GM12878 (cell line): ENCODE measurements at regions of chrX and their contacts with region 1.

Region 1: GRCh38 chrX:78029663-78030062 is 60.2 kb upstream of the PGAM4 start:
- DNase-seq: no peak
- ATAC-seq: peak; percentile 71
- H3K4me3 ChIP-seq: no peak overlapping the region
- H3K27ac ChIP-seq: no peak overlapping the region
- H3K4me1 ChIP-seq: no peaks in the 10 kb centered on the region
- H3K27me3 ChIP-seq: no peaks in the 10 kb centered on the region
- CTCF ChIP-seq: peak; percentile 18 to 76 (median 41); a peak in 4 of 6 replicates
- EP300 ChIP-seq: no peak
- POLR2A ChIP-seq: no peak
- RAD21 ChIP-seq: peak; percentile 44

Region 2: DNA sequence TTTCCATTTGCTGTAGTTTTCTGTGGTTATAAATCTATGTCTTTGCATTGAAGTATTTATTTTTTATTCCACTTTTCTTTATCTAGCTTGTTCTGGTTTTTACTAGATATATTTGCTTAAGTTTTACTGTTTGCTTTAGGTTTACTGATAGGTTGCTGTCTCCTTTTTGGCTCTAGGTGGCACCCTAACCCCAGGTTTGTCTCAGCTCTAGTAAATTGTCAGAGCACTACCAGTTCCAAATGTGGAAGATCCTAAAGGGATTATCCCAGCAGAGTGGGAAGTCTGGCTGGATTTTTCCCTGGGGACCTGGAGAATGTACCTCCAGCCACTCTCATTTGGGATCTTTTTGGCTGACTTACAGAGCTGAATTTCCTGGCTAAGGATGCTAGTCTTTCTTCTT is 1750.7 kb before region 1 on chrX:
- CTCF ChIA-PET with region 1: interaction called, 16 read pairs
- POLR2A ChIA-PET with region 1: no interaction called
- RAD21 ChIA-PET with region 1: interaction called, 8 read pairs
- SMC1A ChIA-PET with region 1: interaction called, 15 read pairs
- in situ Hi-C with region 1: loop called (anchors 10 kb)
- intact Hi-C with region 1: loop called (anchors 1 kb)
- DNase-seq: peak; percentile 5
- ATAC-seq: peak; percentile 79
- H3K4me3 ChIP-seq: no peak overlapping the region
- H3K27ac ChIP-seq: no peak overlapping the region
- H3K4me1 ChIP-seq: no peaks in the 10 kb centered on the region
- H3K27me3 ChIP-seq: no peaks in the 10 kb centered on the region
- CTCF ChIP-seq: peak; percentile 61 to 79 (median 74)
- EP300 ChIP-seq: no peak
- POLR2A ChIP-seq: no peak
- RAD21 ChIP-seq: peak; percentile 94

Region 3: DNA sequence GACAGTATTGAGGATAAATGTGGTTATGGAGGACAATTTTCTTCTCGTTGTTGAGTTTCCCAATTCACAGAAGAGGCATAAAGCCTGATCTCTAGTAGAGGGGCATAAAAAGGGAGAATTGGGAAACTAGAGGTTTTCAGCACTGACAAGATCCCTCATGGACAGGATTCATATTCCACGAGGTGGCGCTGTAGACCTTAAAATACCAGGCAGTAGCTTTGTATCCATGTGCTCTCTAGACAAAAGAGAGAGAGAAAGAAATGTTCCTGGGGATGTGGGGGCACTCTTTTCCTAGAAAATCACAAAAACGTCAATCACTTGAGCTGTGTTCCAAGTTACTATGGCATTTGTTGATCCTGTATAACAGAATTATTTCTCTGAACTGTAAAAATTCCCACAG is 1473.8 kb before region 1 on chrX:
- CTCF ChIA-PET with region 1: interaction called, 8 read pairs
- POLR2A ChIA-PET with region 1: no interaction called
- RAD21 ChIA-PET with region 1: interaction called, 4 read pairs
- SMC1A ChIA-PET with region 1: interaction called, 3 read pairs
- in situ Hi-C with region 1: loop called (anchors 10 kb)
- intact Hi-C with region 1: no loop called
- DNase-seq: no peak
- ATAC-seq: no peak
- H3K4me3 ChIP-seq: no peak overlapping the region
- H3K27ac ChIP-seq: no peak overlapping the region
- H3K4me1 ChIP-seq: no peaks in the 10 kb centered on the region
- H3K27me3 ChIP-seq: no peaks in the 10 kb centered on the region
- CTCF ChIP-seq: peak in 2 of 3 experiments; percentile 4 to 29; a peak in 2 of 6 replicates
- EP300 ChIP-seq: no peak
- POLR2A ChIP-seq: no peak
- RAD21 ChIP-seq: peak; percentile 63

Region 4: DNA sequence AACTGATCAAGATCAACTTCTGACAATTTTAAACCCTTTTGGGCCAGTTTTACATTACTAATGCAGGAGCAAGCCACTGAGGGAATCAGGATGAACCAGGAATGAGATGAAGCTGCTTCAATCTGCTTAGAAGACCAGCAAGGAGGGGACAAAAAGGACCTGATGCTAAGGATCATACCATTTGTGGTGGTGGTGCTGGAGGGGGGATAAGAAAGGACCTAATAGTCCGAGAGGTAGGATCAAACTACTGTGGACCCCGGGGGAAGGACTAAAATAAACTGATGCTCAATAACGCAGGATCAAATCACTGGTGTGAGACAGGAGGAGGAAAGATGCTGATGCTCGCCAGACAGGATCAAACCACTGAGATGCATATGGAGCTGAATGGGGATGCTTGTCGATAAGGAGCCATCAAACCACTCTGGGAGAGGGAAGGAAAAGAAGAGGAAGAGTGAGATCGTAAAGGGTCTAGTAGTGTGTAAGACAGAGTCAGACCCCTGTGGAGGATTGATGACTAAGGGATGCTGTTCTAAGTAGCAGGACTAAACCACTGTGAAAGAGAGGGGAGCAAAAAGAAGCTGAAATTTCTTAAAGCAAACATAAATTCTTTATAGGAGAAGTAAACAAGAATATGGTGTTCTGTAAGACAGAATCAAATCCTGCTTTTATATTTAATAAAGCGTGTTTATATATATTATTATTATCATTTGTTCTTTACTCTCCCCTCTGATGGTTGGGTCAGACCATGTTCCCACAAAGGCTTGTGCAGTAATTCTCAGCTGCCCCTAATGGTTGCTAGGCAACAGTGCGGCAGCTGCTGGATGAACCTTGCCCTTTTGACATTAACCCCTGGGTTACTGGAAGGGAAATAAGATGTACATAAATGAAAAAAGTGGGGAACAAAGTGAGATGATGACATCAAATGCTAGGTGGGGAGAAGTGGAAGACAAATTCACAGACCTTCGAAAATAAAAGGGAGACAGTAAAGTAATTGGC is 1015.0 kb before region 1 on chrX:
- CTCF ChIA-PET with region 1: no interaction called
- POLR2A ChIA-PET with region 1: no interaction called
- RAD21 ChIA-PET with region 1: no interaction called
- SMC1A ChIA-PET with region 1: no interaction called
- in situ Hi-C with region 1: no loop called
- intact Hi-C with region 1: no loop called
- DNase-seq: no peak
- ATAC-seq: no peak
- H3K4me3 ChIP-seq: no peak overlapping the region
- H3K27ac ChIP-seq: no peak overlapping the region
- H3K4me1 ChIP-seq: no peaks in the 10 kb centered on the region
- H3K27me3 ChIP-seq: no peaks in the 10 kb centered on the region
- CTCF ChIP-seq: no peak
- EP300 ChIP-seq: no peak
- POLR2A ChIP-seq: no peak
- RAD21 ChIP-seq: no peak

Region 5: GRCh38 chrX:77564823-77565222 is 464.8 kb before region 1 on chrX:
- CTCF ChIA-PET with region 1: no interaction called
- POLR2A ChIA-PET with region 1: no interaction called
- RAD21 ChIA-PET with region 1: no interaction called
- SMC1A ChIA-PET with region 1: no interaction called
- in situ Hi-C with region 1: no loop called
- intact Hi-C with region 1: no loop called
- DNase-seq: no peak
- ATAC-seq: no peak
- H3K4me3 ChIP-seq: no peak overlapping the region
- H3K27ac ChIP-seq: no peak overlapping the region
- H3K4me1 ChIP-seq: no peaks in the 10 kb centered on the region
- H3K27me3 ChIP-seq: no peaks in the 10 kb centered on the region
- CTCF ChIP-seq: no peak
- EP300 ChIP-seq: no peak
- POLR2A ChIP-seq: no peak
- RAD21 ChIP-seq: no peak

Region 6: GRCh38 chrX:77675986-77676385 is 353.7 kb before region 1 on chrX:
- CTCF ChIA-PET with region 1: no interaction called
- POLR2A ChIA-PET with region 1: no interaction called
- RAD21 ChIA-PET with region 1: no interaction called
- SMC1A ChIA-PET with region 1: interaction called, 5 read pairs
- in situ Hi-C with region 1: no loop called
- intact Hi-C with region 1: loop called (anchors 5 kb)
- DNase-seq: no peak
- ATAC-seq: no peak
- H3K4me3 ChIP-seq: no peak overlapping the region
- H3K27ac ChIP-seq: no peak overlapping the region
- H3K4me1 ChIP-seq: no peaks in the 10 kb centered on the region
- H3K27me3 ChIP-seq: no peaks in the 10 kb centered on the region
- CTCF ChIP-seq: no peak
- EP300 ChIP-seq: no peak
- POLR2A ChIP-seq: no peak
- RAD21 ChIP-seq: no peak

Region 7: GRCh38 chrX:78048052-78048451 is 18.4 kb after region 1 on chrX:
- CTCF ChIA-PET with region 1: interaction called, 12 read pairs
- POLR2A ChIA-PET with region 1: interaction called, 4 read pairs
- RAD21 ChIA-PET with region 1: interaction called, 3 read pairs
- SMC1A ChIA-PET with region 1: interaction called, 6 read pairs
- in situ Hi-C with region 1: no loop called
- intact Hi-C with region 1: no loop called
- DNase-seq: no peak
- ATAC-seq: no peak
- H3K4me3 ChIP-seq: no peak overlapping the region
- H3K27ac ChIP-seq: no peak overlapping the region
- H3K4me1 ChIP-seq: no peaks in the 10 kb centered on the region
- H3K27me3 ChIP-seq: no peaks in the 10 kb centered on the region
- CTCF ChIP-seq: no peak
- EP300 ChIP-seq: no peak
- POLR2A ChIP-seq: no peak
- RAD21 ChIP-seq: no peak

Region 8: DNA sequence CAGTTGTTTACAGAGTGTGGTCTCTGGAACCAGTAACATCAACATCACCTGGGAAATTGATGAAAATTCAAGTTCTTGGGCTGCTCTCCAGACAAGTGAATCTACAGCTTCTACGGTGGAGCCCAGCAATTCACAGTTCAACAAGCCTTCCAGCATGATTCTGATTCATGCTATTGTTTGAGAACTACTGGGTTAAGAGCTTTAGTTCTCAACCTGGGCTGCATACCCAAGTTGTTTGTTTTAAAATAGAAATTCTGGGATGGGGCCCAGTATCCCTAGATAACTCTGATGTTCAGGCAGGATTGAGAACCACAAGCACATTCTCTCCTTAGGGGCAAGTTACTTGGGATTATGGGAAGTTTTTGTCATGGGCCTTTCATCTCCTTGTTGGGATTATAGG is 36.4 kb after region 1 on chrX:
- CTCF ChIA-PET with region 1: interaction called, 6 read pairs
- POLR2A ChIA-PET with region 1: interaction called, 4 read pairs
- RAD21 ChIA-PET with region 1: interaction called, 4 read pairs
- SMC1A ChIA-PET with region 1: interaction called, 11 read pairs
- in situ Hi-C with region 1: no loop called
- intact Hi-C with region 1: no loop called
- DNase-seq: no peak
- ATAC-seq: no peak
- H3K4me3 ChIP-seq: no peak overlapping the region
- H3K27ac ChIP-seq: peak overlapping the region; percentile 87
- H3K4me1 ChIP-seq: peaks cover 19% of the 10 kb centered on the region
- H3K27me3 ChIP-seq: no peaks in the 10 kb centered on the region
- CTCF ChIP-seq: no peak
- EP300 ChIP-seq: no peak
- POLR2A ChIP-seq: no peak
- RAD21 ChIP-seq: no peak

Region 9: GRCh38 chrX:78092296-78092695 is 62.6 kb after region 1 on chrX:
- CTCF ChIA-PET with region 1: interaction called, 27 read pairs
- POLR2A ChIA-PET with region 1: no interaction called
- RAD21 ChIA-PET with region 1: interaction called, 10 read pairs
- SMC1A ChIA-PET with region 1: interaction called, 8 read pairs
- in situ Hi-C with region 1: no loop called
- intact Hi-C with region 1: loop called (anchors 2 kb)
- DNase-seq: peak; percentile 37
- ATAC-seq: peak; percentile 98
- H3K4me3 ChIP-seq: no peak overlapping the region
- H3K27ac ChIP-seq: no peak overlapping the region
- H3K4me1 ChIP-seq: no peaks in the 10 kb centered on the region
- H3K27me3 ChIP-seq: no peaks in the 10 kb centered on the region
- CTCF ChIP-seq: peak; percentile 45; a peak in 5 of 6 replicates
- EP300 ChIP-seq: no peak
- POLR2A ChIP-seq: no peak
- RAD21 ChIP-seq: peak; percentile 73

Region 10: GRCh38 chrX:78119521-78120227 is 90.0 kb after region 1 on chrX:
- CTCF ChIA-PET with region 1: no interaction called
- POLR2A ChIA-PET with region 1: no interaction called
- RAD21 ChIA-PET with region 1: no interaction called
- SMC1A ChIA-PET with region 1: no interaction called
- in situ Hi-C with region 1: no loop called
- intact Hi-C with region 1: no loop called
- DNase-seq: no peak
- ATAC-seq: peak; percentile 62
- H3K4me3 ChIP-seq: no peak overlapping the region
- H3K27ac ChIP-seq: no peak overlapping the region
- H3K4me1 ChIP-seq: no peaks in the 10 kb centered on the region
- H3K27me3 ChIP-seq: no peaks in the 10 kb centered on the region
- CTCF ChIP-seq: peak; percentile 16 to 29 (median 17); a peak in 2 of 6 replicates
- EP300 ChIP-seq: no peak
- POLR2A ChIP-seq: no peak
- RAD21 ChIP-seq: peak; percentile 31; the same call in 1 of the 2 replicates